ENCODE measurements at regions of chrX and their contacts with region 1.

Region 1: DNA sequence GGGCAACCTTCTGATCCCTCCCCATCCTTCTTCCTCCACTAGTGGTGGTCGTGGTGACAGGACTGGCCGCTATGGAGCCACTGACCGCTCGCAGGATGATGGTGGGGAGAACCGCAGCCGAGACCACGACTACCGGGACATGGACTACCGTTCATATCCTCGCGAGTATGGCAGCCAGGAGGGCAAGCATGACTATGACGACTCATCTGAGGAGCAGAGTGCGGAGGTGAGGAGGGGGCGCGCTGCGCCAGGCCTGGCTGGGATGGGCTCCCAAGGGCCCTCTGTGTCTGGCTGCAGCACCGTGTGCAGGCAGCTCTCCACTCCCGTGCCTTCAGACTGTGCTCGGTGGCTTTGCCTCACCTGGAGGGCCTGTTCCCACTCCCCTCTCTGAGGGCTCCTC is 24.3 kb downstream of the RBM10 start:
- DNase-seq: no peak
- ATAC-seq: no peak
- H3K4me3 ChIP-seq: no peak overlapping the region
- H3K4me3 Mint-ChIP-seq: no peak overlapping the region
- H3K27ac ChIP-seq: no peak overlapping the region
- H3K27ac Mint-ChIP-seq: no peak overlapping the region
- H3K4me1 ChIP-seq: no peaks in the 10 kb centered on the region
- H3K4me1 Mint-ChIP-seq: peaks cover 0 to 4% (median 0%) of the 10 kb centered on the region in 3 donors
- H3K27me3 ChIP-seq: no peaks in the 10 kb centered on the region
- H3K27me3 Mint-ChIP-seq: peaks cover 0 to 4% of the 10 kb centered on the region in 2 donors

Region 2: DNA sequence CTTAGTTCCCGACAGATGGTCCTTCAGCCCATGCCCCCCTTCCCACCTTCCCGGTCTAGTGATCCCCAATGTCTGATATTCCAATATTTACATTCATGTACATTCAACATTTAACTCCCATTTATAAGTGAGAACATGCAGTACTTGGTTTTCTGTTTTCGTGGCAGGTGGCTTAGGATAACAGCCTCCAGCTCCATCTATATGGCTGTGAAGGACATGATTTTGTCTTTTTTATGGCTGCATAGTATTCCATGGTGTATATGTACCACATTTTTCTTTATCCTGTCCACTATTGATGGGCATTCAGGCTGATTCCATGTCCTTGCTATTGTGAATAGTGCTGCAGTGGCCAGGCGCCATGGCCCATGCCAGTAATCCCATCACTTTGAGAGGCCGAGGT is 10.5 kb before region 1 on chrX:
- CTCF ChIA-PET with region 1: no interaction called
- POLR2A ChIA-PET with region 1: interaction called in 1 of 2 experiments, 10 read pairs
- DNase-seq: no peak
- ATAC-seq: no peak
- H3K4me3 ChIP-seq: no peak overlapping the region
- H3K4me3 Mint-ChIP-seq: no peak overlapping the region
- H3K27ac ChIP-seq: no peak overlapping the region
- H3K27ac Mint-ChIP-seq: no peak overlapping the region
- H3K4me1 ChIP-seq: no peaks in the 10 kb centered on the region
- H3K4me1 Mint-ChIP-seq: peaks cover 0 to 9% (median 0%) of the 10 kb centered on the region in 3 donors
- H3K27me3 ChIP-seq: no peaks in the 10 kb centered on the region
- H3K27me3 Mint-ChIP-seq: no peaks in the 10 kb centered on the region

Measured in T-cell (primary cell).